ENCODE measurements at regions of chr5 and their contacts with region 1.

Region 1: GRCh38 chr5:141691867-141692532 is 10.0 kb upstream of the ARAP3 start:
- DNase-seq: peak; percentile 90
- H3K4me3 Mint-ChIP-seq: peak overlapping the region; percentile 31
- H3K27ac Mint-ChIP-seq: no peak overlapping the region
- H3K4me1 Mint-ChIP-seq: peaks cover 27% of the 10 kb centered on the region
- H3K27me3 Mint-ChIP-seq: peaks cover 58% of the 10 kb centered on the region

Region 2: DNA sequence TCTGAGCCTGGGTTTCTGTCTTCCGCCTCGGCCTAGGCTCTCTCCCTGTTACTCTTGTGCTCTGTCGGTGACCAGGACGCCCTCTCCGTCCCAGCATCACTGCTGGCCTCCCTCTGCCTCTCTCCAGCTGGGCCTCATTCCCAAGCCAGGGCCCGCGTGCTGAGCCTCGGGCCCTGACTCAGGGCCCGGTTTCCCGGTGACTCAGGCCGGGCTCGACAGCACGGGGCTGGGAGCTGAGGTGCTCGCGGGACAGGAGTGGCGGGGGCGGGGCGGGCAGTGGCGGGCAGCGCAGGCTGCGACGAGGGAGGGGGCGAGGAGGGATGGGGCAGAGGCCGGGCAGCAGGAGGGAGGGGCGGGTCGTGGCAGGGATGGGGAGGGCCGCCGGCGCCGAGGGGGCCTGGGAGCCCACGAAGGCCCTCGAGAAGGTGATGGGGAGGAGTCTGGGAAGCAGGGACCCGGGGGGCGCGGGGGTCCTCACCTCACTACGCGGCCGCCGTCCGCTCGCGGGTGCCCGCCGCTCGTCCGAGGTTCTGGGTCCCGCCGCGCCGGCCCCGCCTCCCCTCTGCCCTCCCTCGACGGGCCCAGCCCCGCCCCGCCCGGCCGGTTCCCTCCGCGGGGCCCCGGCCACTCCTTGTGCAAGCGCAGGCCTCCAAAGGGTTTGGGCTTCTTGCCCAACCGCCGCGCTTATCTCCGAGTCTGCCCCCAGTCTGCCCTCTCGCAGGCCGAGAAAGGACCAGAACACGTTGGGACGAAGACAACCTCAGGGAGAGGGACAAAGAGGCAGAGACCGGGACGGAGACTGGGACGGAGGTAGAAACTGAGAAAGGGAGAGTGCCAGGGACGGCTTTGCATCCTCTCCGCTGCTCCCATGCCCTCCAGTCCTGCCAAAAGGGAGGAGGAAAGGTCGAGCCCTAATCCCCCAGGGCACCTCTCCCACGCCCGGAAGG is 10.0 kb before region 1 on chr5 and contains the start of gene ARAP3:
- CTCF ChIA-PET with region 1: interaction called, 19 read pairs
- DNase-seq: peak; percentile 63
- H3K4me3 Mint-ChIP-seq: peak within 1 kb of the TSS; percentile 72
- H3K27ac Mint-ChIP-seq: peak within 1 kb of the TSS; percentile 58
- H3K4me1 Mint-ChIP-seq: peaks cover 42% of the 10 kb centered on the region
- H3K27me3 Mint-ChIP-seq: peaks cover 40% of the 10 kb centered on the region

Region 3: GRCh38 chr5:141878711-141879425 is 186.9 kb after region 1 on chr5:
- CTCF ChIA-PET with region 1: interaction called, 157 read pairs
- DNase-seq: peak; percentile 92
- H3K4me3 Mint-ChIP-seq: peak overlapping the region; percentile 48
- H3K27ac Mint-ChIP-seq: no peak overlapping the region
- H3K4me1 Mint-ChIP-seq: peaks cover 22% of the 10 kb centered on the region
- H3K27me3 Mint-ChIP-seq: peaks cover 99% of the 10 kb centered on the region

Region 4: DNA sequence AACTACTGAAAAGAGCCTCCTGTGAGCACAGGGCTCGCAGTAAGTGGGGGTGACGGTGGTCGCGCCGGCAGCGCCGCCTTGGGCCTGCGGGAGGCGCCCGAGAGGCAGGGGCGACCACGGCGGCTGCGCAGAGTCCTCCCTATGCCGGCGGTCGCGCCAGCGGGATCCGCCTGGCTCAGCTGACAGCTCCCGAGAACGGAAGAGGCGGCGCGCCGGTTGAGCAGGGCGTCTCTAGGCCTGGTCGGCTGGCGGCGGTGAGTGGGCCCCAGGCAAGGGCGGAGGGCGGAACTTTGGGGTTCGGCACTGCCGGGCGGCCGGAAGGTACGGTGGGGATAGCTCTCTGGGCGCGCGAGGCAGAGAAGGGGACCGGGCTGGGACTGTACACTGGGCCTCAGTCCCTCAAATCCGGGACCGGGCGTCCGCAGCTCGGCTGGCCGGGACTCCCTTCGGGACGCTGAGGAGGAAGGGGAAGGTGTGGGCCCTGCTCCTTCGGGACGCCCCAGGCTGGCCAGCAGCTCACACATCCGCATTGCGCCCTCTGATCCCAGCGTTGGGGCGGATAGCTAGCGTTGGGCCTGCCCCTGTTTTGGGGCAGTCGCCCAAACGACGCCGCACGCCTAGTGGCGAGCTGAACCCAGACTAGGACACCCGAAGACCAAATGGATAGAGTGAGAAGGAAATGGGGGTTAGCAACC is 277.1 kb after region 1 on chr5 and contains the start of gene RNF14:
- CTCF ChIA-PET with region 1: interaction called, 155 read pairs
- DNase-seq: peak; percentile 96
- H3K4me3 Mint-ChIP-seq: peak within 1 kb of the TSS; percentile 80
- H3K27ac Mint-ChIP-seq: peak within 1 kb of the TSS; percentile 97
- H3K4me1 Mint-ChIP-seq: peaks cover 35% of the 10 kb centered on the region
- H3K27me3 Mint-ChIP-seq: peaks cover 5% of the 10 kb centered on the region

Region 5: DNA sequence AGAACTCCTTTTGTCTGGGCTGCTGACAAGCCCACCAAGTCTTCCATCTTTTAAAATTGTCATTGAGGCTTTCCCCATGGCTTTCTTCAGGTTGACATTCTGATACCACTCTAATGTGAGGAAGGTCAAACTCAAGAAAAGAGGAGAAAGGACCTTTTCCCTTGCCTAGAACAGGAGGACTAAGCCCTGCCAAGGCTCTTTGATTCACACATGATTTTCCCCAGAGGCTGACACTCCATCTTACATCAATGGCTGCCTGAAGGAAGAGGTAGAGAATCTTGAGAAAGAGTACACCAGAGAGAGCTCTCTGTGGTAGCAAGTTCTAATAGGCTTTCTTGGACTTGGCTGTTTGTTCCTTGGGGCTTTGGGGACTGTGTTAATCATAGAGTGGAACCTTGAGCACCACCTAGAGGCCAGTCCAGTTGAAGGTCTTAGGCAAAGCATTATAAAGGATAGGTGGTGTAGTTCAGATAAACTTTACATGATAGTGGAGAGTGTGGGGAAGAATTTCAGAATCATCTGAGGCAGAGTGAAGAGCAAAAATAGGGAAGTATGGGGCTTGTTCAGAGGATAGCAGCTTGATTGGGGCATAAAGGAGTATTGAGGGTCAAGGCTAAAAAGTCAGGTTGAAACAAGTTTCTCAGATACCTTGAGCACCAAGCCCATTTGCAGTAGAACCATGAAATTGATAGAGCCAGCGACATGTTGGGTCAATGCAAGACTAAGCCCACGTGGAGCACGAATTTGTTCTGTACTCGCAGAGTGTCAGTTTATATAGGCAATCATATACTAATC is 453.3 kb after region 1 on chr5:
- CTCF ChIA-PET with region 1: interaction called, 12 read pairs
- DNase-seq: peak; percentile 78
- H3K4me3 Mint-ChIP-seq: no peak overlapping the region
- H3K27ac Mint-ChIP-seq: no peak overlapping the region
- H3K4me1 Mint-ChIP-seq: no peaks in the 10 kb centered on the region
- H3K27me3 Mint-ChIP-seq: no peaks in the 10 kb centered on the region